Astrocyte of the cerebellum (primary cell): ENCODE measurements at regions of chr10 and their contacts with region 1.

Region 1: DNA sequence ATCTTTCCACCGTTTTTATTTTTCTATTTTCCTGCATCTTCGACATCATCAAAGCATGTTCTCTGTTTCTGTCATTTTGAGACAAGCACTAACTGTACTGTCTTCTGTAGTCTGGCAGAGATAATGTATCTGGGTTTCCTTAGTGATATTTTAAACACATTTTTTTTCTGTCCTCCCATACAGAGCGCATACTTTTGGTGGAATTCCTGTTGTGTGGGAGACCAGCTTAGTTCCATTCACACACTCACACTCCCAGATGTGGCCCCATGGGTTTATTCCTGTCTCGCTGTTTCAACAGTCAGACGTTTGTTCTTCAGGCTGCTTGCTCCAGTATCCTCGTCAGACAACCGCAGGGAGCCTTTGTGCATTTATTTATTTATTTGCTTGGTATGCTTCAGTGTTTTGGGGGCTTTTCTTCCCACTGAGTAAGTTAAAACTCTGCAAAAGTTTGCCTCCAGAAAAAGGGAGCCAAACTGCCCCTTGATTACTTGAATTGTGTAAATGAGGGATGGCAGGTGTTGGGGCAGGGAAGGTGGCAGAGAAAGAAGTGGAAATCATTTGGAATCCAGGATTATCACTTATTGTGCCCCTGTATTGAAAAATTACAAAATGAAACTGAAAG is 456.8 kb upstream of the KLF6 start:
- DNase-seq: peak; percentile 100
- H3K4me3 ChIP-seq: peak overlapping the region; percentile 20
- CTCF ChIP-seq: no peak

Region 2: DNA sequence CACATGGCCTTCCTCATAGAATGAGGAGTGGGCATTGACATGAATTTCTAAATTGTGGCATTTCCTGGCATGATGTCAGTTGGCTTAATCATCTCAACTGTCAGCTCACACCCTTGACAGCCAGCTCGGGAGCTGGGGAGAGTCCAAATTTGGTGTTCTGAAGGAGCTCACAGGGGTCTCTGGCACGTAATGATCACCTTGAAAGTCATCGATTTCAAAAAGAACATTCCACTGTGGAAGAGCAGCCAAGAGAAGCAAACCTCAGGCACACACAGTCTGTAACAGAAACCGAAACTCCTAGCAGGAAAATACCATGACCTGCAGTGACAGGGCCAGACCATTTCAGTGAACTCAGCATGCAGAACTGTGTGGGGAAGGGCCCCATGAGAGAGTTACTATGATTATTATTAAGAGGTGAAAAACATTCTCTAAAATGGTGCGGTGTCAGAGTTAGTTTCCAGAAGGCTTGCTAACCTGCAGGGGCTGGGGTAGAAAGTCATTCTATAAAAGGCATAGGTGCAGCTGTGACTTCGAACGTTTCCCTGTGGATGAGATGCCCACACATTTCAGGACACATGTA is 430.5 kb before region 1 on chr10:
- in situ Hi-C with region 1: loop called (anchors 25 kb)
- DNase-seq: peak; percentile 90
- H3K4me3 ChIP-seq: no peak overlapping the region
- CTCF ChIP-seq: no peak

Region 3: GRCh38 chr10:4767033-4767814 is 525.4 kb after region 1 on chr10:
- in situ Hi-C with region 1: loop called (anchors 5 kb)
- DNase-seq: peak; percentile 54
- H3K4me3 ChIP-seq: no peak overlapping the region
- CTCF ChIP-seq: peak; percentile 70